ENCODE measurements at regions of chr15 and their contacts with region 1.

Region 1: DNA sequence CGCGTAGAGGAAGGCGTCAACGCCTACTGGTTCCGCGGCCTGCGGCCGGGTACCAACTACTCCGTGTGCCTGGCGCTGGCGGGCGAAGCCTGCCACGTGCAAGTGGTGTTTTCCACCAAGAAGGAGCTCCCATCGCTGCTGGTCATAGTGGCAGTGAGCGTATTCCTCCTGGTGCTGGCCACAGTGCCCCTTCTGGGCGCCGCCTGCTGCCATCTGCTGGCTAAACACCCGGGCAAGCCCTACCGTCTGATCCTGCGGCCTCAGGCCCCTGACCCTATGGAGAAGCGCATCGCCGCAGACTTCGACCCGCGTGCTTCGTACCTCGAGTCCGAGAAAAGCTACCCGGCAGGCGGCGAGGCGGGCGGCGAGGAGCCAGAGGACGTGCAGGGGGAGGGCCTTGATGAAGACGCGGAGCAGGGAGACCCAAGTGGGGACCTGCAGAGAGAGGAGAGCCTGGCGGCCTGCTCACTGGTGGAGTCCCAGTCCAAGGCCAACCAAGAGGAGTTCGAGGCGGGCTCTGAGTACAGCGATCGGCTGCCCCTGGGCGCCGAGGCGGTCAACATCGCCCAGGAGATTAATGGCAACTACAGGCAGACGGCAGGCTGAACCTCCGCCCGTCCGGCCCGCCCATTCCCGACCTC is 4.1 kb downstream of the ISLR2 start:
- DNase-seq: no peak
- ATAC-seq: no peak
- H3K4me3 ChIP-seq: no peak overlapping the region
- H3K27ac ChIP-seq: no peak overlapping the region
- H3K4me1 ChIP-seq: peaks cover 6 to 35% of the 10 kb centered on the region in 2 donors
- H3K27me3 ChIP-seq: peaks cover 69 to 79% (median 78%) of the 10 kb centered on the region in 3 donors
- CTCF ChIP-seq: peak in 2 of 5 experiments; percentile 10 to 38
- POLR2A ChIP-seq: no peak

Region 2: DNA sequence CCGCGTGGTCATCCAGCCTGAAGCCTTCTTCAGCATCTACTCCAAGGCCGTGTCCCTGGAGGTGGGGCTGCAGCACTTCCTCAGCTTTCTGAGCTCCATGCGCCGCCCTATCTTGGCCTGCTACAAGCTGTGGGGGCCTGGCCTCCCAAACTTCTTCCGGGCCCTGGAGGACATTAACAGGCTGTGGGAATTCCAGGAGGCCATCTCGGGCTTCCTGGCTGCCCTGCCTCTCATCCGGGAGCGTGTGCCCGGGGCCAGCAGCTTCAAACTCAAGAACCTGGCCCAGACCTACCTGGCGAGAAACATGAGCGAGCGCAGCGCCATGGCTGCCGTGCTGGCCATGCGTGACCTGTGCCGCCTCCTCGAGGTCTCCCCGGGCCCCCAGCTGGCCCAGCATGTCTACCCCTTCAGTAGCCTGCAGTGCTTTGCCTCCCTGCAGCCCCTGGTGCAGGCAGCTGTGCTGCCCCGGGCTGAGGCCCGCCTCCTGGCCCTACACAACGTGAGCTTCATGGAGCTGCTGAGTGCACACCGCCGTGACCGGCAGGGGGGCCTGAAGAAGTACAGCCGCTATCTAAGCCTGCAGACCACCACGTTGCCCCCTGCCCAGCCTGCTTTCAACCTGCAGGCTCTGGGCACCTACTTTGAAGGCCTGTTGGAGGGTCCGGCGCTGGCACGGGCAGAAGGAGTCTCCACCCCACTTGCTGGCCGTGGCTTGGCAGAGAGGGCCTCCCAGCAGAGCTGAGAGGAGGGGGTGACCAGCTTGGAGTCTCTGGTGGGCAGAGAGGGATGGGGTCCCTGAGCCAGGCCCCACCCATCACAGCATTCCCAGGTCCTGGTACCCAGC is 90.0 kb before region 1 on chr15:
- in situ Hi-C with region 1: no loop called
- intact Hi-C with region 1: no loop called
- DNase-seq: peak in 1 of 2 donors; percentile 38
- ATAC-seq: peak; percentile 10 to 19
- H3K4me3 ChIP-seq: no peak overlapping the region
- H3K27ac ChIP-seq: peak overlapping the region; percentile 28 to 67 (median 57)
- H3K4me1 ChIP-seq: peaks cover 9 to 13% of the 10 kb centered on the region in 2 donors
- H3K27me3 ChIP-seq: no peaks in the 10 kb centered on the region
- CTCF ChIP-seq: no peak
- POLR2A ChIP-seq: no peak

Region 3: DNA sequence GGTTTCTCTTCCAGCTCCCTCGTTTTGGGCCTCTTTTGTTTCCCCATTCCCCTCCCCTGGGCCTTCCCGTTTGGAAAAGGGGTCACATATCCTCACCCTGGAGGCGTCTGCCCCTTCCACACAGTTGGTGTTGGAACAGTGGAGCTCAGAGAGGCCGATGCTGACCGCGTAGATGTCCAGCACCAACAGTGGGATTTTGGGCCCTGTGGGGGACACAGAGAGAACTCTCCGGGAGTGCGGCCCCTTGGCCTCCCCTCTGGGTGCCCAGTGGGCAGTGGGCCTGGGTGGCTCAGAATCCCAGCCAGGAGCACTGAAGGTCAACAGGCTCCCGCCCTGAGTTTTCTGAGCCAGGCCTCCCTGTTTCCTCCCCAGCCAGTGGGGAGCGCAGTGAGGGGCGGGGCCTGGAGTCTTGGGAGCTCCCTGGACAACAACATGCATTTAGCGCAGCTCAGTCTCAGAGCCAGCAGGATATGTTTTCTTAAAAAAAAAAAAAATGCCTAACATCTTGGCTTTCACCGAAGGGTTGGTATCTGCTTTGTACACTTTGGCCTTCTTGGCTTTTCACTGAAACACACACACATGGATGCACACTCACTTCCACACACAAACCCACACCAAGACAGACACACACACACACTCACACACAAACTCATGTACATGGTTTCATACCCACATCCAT is 38.3 kb after region 1 on chr15:
- in situ Hi-C with region 1: no loop called
- intact Hi-C with region 1: loop called (anchors 5 kb)
- DNase-seq: peak in 1 of 2 donors; percentile 58
- ATAC-seq: peak; percentile 53 to 57
- H3K4me3 ChIP-seq: no peak overlapping the region
- H3K27ac ChIP-seq: peak overlapping the region; percentile 27 to 78 (median 52)
- H3K4me1 ChIP-seq: peaks cover 3% of the 10 kb centered on the region in 2 donors
- H3K27me3 ChIP-seq: no peaks in the 10 kb centered on the region
- CTCF ChIP-seq: no peak
- POLR2A ChIP-seq: no peak

Region 4: DNA sequence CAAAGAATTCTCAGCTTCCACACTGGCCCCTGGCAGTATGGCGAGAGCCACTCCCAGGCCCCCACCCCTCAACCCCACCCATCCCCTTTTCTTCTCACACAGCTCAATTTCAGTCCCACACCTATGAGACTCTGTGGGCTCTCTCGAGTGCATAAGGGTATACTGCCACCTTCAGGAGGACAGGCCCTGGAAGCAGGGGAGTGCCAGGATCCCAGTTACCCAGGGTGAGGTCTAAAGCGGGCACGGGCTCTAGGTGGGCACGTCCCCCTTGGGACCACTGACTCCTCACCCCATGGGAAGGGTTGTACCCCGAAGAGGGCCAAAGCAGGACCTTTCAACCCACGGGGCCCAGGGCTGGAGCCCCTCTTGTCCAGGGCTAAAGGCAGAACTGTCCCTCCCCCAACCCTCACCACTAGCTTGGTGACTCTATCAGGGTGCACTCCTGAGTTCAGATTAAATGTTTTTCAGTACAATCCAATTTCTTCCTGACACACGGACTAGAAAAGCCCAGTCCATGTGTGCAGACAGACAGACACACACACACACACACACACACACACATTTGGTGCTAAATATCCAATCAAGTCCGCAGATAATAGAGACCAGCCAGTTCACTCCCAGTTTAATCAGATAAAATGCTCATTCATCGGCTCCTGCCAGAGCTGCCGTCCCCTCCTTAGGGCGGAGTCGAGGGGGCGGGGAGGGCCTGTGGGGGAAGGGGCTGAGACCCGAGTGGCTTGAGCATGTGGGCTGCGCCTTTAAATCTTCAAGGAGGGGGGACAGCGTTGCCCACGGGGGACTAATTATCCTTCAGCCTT is 173.5 kb after region 1 on chr15:
- in situ Hi-C with region 1: loop called in 3 of 4 experiments (anchors 5 to 10 kb)
- intact Hi-C with region 1: no loop called
- DNase-seq: peak in 1 of 2 donors; percentile 35
- ATAC-seq: peak; percentile 64 to 83
- H3K4me3 ChIP-seq: no peak overlapping the region
- H3K27ac ChIP-seq: no peak overlapping the region
- H3K4me1 ChIP-seq: no peaks in the 10 kb centered on the region
- H3K27me3 ChIP-seq: peaks cover 6 to 10% (median 10%) of the 10 kb centered on the region in 3 donors
- CTCF ChIP-seq: peak; percentile 30 to 82 (median 66)
- POLR2A ChIP-seq: no peak